HCT116 (cell line): ENCODE measurements at regions of chr2 and their contacts with region 1.

Region 1: DNA sequence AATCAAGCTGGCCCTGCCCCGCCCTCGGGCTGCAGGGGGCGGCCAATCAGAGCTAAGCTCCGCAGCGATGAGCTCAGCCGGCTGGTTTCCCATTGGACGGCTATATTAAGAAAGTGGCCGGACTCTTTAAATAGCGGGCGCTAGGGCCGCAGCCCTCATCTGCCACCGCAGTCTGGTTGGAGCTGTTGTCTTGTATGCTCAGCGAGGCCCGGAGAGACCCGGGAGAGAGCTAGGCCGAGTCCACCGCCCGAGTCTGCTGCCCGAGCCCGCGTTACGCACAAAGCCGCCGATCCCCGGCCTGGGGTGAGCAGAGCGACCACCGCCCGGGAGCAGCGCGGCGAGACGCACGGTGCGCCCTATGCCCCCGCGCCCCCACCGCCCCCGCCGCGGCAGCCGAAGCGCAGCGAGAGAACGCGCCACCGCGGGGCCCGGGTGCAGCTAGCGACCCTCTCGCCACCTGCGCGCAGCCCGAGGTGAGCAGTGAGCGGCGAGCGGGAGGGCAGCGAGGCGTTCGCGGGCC is at the start of gene RHOB:
- DNase-seq: peak; percentile 94
- ATAC-seq: peak; percentile 88
- H3K4me3 ChIP-seq: peak within 1 kb of the TSS; percentile 72 to 80
- H3K27ac ChIP-seq: peak within 1 kb of the TSS; percentile 88
- H3K4me1 ChIP-seq: peaks cover 41 to 53% of the 10 kb centered on the region in 2 experiments
- H3K27me3 ChIP-seq: no peaks in the 10 kb centered on the region
- CTCF ChIP-seq: no peak
- POLR2A ChIP-seq: peak; percentile 99
- RAD21 ChIP-seq: no peak; the same call in 1 of the 2 replicates
- total RNA-seq, gene RHOB: 72.9 TPM

Region 2: GRCh38 chr2:20378792-20379519 is 68.0 kb before region 1 on chr2:
- CTCF ChIA-PET with region 1: no interaction called
- POLR2A ChIA-PET with region 1: interaction called, 11 read pairs
- RAD21 ChIA-PET with region 1: no interaction called
- intact Hi-C with region 1: no loop called
- DNase-seq: peak; percentile 38
- ATAC-seq: peak; percentile 99
- H3K4me3 ChIP-seq: no peak overlapping the region
- H3K27ac ChIP-seq: no peak overlapping the region
- H3K4me1 ChIP-seq: peaks cover 0 to 4% of the 10 kb centered on the region in 2 experiments; a peak in 1 of 4 replicates
- H3K27me3 ChIP-seq: no peaks in the 10 kb centered on the region
- CTCF ChIP-seq: peak; percentile 65 to 82 (median 78)
- POLR2A ChIP-seq: no peak
- RAD21 ChIP-seq: peak; percentile 79

Region 3: GRCh38 chr2:20411361-20411894 is 35.5 kb before region 1 on chr2:
- CTCF ChIA-PET with region 1: interaction called, 53 read pairs
- POLR2A ChIA-PET with region 1: interaction called, 14 read pairs
- RAD21 ChIA-PET with region 1: interaction called, 4 read pairs
- intact Hi-C with region 1: no loop called
- DNase-seq: peak; percentile 61
- ATAC-seq: peak; percentile 100
- H3K4me3 ChIP-seq: no peak overlapping the region
- H3K27ac ChIP-seq: no peak overlapping the region
- H3K4me1 ChIP-seq: peaks cover 0 to 2% of the 10 kb centered on the region in 2 experiments; a peak in 1 of 4 replicates
- H3K27me3 ChIP-seq: no peaks in the 10 kb centered on the region
- CTCF ChIP-seq: peak; percentile 73 to 87 (median 82)
- POLR2A ChIP-seq: no peak
- RAD21 ChIP-seq: peak; percentile 77

Region 4: DNA sequence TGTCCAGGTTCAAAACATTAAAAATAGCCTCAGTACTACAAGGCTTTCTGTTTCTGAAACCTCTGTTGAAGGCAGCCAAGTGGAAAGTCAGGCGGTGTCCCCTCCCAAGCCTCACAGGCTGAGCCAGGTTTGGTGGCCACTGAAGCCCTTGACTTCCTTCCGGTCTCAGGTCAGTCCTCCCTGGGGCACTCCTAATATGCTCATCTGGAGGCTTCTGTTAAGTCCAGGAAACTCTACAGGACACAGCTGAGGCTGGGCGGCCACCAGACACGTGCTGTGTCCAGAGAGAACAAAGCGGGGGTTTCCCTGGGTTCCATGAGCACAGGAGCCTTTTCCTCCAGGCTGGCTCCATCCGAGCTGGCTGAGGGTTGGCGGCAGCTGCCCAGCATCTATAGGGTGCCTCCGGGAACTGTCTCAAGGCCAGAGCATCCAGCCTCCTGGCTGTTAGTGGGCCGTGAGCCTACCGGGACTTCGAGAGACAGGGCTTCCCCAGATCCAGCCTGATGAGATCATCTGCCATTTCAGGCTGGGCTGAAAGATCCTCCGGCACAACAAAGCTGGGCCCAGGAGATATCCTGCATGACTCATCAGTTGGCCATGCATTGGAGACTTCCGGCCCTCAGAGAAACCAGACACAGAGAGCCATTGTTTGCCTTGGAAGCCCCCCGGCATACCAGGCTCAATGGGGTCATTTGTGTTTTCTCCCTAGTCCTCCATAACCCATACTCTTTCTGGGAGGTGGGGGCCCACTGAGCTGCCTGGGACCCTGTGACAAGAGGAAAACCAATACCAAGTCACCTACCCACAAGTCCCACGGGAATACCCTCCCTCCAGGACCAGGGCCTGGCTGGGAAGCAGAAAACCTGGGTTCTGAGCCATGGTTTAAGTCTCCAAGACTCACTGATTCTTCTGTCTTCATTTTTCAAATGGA is 132.2 kb after region 1 on chr2:
- CTCF ChIA-PET with region 1: no interaction called
- POLR2A ChIA-PET with region 1: interaction called, 70 read pairs
- RAD21 ChIA-PET with region 1: interaction called in 1 of 2 experiments, 4 read pairs
- intact Hi-C with region 1: no loop called
- DNase-seq: peak; percentile 92
- ATAC-seq: peak; percentile 78
- H3K4me3 ChIP-seq: peak overlapping the region in 1 of 2 experiments; percentile 16; a peak in 1 of 4 replicates
- H3K27ac ChIP-seq: peak overlapping the region; percentile 80
- H3K4me1 ChIP-seq: peaks cover 47 to 64% of the 10 kb centered on the region in 2 experiments
- H3K27me3 ChIP-seq: no peaks in the 10 kb centered on the region
- CTCF ChIP-seq: no peak
- POLR2A ChIP-seq: no peak
- RAD21 ChIP-seq: no peak

Region 5: GRCh38 chr2:20600756-20601325 is 153.9 kb after region 1 on chr2:
- CTCF ChIA-PET with region 1: interaction called, 5 read pairs
- POLR2A ChIA-PET with region 1: interaction called, 53 read pairs
- RAD21 ChIA-PET with region 1: interaction called in 1 of 2 experiments, 4 read pairs
- intact Hi-C with region 1: no loop called
- DNase-seq: no peak
- ATAC-seq: no peak; the same call in 1 of the 2 replicates
- H3K4me3 ChIP-seq: no peak overlapping the region
- H3K27ac ChIP-seq: no peak overlapping the region
- H3K4me1 ChIP-seq: peaks cover 9 to 22% of the 10 kb centered on the region in 2 experiments; a peak in 3 of 4 replicates
- H3K27me3 ChIP-seq: no peaks in the 10 kb centered on the region
- CTCF ChIP-seq: peak; percentile 25 to 49 (median 34); a peak in 3 of 6 replicates
- POLR2A ChIP-seq: no peak
- RAD21 ChIP-seq: peak; percentile 44

Region 6: DNA sequence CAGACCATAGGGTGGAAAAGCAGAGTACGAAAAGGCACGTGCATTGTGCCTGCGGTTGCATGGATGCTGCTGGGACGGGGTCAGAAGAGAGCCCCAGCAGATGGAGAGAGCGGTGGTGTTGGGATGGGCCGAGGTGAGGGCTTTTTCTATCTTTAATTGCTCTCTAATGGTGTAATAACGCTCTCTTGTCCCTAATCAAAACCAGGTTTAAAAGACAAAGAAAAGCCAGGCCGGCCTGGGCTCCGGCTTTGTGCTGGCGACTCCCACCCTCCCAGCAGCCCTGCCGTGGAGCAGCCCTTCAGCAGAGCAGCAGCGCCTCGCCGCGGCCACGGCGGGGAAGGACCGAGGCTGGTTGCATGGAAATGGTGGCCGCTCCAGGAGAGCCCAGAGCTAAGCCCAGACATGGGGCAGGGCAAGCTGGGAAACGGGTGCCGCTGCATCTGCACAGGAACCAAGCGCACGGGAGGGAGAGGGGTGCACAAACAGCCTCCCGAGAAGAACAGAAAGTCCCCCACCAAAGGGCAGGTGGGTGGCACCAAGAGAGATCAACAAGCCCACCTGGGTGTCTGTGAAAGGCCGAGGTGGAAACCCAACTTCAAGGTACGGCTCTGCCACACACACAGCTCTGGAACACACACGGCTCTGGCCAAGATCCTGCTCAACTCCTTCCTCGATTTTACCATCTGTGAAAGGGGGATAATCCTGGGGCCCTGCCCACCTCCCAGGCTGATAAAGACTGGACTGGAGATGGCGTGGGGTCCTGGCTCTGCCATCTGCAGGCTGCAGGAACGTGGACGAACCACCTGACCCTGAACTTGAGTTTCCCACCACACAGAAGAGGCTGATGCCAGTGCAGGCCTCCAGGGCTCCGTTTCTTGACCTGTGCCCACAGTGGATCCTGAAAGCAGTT is 189.0 kb after region 1 on chr2:
- CTCF ChIA-PET with region 1: interaction called, 66 read pairs
- POLR2A ChIA-PET with region 1: interaction called, 66 read pairs
- RAD21 ChIA-PET with region 1: interaction called, 7 to 15 read pairs
- intact Hi-C with region 1: loop called (anchors 1 kb)
- DNase-seq: peak; percentile 21
- ATAC-seq: peak; percentile 98
- H3K4me3 ChIP-seq: no peak overlapping the region
- H3K27ac ChIP-seq: no peak overlapping the region
- H3K4me1 ChIP-seq: peaks cover 9 to 18% of the 10 kb centered on the region in 2 experiments; a peak in 3 of 4 replicates
- H3K27me3 ChIP-seq: no peaks in the 10 kb centered on the region
- CTCF ChIP-seq: peak; percentile 92 to 96 (median 94)
- POLR2A ChIP-seq: no peak
- RAD21 ChIP-seq: peak; percentile 100